AG04449 (cell line): ENCODE measurements at regions of chr1 and their contacts with region 1.

Region 1: DNA sequence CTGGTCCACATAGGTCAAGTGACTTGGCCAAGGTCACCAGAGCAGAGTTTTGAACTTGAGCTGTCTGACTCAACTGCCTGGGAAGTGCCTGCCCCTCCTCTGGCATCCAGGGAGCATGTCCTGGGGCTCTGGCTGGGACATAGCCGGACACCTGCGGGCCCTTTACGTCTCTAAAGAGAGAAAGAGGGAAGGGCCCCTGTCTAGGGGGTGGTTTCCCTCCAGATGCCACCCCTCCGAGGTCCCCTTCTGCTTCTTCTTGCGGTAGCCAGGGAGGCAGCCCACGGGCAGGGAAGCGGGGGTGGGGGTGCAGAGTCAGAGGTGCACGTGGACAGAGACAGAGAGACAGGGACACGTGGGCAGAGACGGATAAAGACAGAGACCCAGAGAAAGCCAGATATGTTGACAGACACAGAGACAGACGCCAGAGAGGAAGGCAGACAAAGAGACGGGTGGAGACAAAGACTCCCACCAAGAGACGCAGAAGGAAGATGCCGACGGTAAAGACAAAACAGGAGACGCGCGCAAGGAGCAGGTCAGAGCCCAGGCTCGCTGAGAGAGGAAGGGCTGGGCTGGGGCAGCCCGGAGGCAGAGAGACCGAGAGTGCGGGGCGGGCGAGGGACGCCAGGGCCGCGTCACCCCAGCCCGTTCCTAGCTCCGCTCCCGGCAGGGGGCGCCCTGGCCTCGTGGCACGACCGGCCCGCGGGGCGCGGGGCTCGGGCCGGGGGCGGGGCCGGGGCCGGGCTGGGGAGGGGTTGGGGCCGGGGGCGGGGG is 458 bp upstream of the ALPL start:
- DNase-seq: no peak
- H3K4me3 ChIP-seq: no peak overlapping the region; the same call in 1 of the 2 replicates
- CTCF ChIP-seq: peak; percentile 76

Region 2: GRCh38 chr1:21344750-21345443 is 163.9 kb before region 1 on chr1:
- CTCF ChIA-PET with region 1: no interaction called
- POLR2A ChIA-PET with region 1: no interaction called
- DNase-seq: no peak
- H3K4me3 ChIP-seq: peak overlapping the region; percentile 84
- CTCF ChIP-seq: no peak

Region 3: GRCh38 chr1:21497466-21498061 is 11.2 kb before region 1 on chr1:
- CTCF ChIA-PET with region 1: interaction called, 21 read pairs
- POLR2A ChIA-PET with region 1: no interaction called
- DNase-seq: no peak
- H3K4me3 ChIP-seq: no peak overlapping the region
- CTCF ChIP-seq: no peak

Region 4: GRCh38 chr1:21520899-21521716 is 12.3 kb after region 1 on chr1:
- CTCF ChIA-PET with region 1: interaction called, 22 read pairs
- POLR2A ChIA-PET with region 1: no interaction called
- DNase-seq: peak; percentile 23
- H3K4me3 ChIP-seq: no peak overlapping the region
- CTCF ChIP-seq: no peak

Region 5: DNA sequence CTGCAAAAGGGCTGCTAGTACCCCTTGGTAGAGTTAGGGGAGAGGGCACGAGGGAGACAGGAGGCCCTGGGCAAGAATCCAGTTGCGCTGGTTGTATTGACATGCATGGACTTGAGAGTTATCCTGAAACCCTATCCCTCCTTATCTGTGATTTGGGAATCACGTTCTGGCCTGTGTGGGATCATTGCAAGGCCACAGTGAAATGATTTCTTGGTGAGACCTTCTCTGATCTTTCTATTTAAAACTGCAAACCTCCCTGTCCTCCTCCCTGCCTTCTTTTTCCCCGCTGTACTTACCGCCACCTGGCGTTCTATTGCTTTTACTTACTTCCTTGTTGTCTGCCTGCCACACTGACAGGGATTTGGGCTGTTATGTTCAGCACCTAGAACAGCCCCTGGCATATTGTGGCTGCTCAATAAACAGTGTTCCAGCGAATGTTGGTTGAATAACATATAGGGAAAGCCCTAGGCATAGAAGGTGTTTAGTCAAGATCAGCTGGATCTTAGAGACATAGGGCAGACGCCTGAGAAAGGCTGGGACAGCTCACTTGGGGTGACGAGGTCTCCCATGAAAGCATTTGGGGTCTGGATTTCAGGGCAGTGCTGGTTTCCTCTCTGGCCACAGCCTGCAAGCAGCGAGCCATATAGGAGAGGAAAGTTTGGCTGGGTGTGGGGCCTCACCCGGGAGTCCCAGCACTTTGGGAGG is 26.1 kb after region 1 on chr1:
- CTCF ChIA-PET with region 1: interaction called, 24 read pairs
- POLR2A ChIA-PET with region 1: no interaction called
- DNase-seq: no peak
- H3K4me3 ChIP-seq: no peak overlapping the region
- CTCF ChIP-seq: peak; percentile 63

Region 6: DNA sequence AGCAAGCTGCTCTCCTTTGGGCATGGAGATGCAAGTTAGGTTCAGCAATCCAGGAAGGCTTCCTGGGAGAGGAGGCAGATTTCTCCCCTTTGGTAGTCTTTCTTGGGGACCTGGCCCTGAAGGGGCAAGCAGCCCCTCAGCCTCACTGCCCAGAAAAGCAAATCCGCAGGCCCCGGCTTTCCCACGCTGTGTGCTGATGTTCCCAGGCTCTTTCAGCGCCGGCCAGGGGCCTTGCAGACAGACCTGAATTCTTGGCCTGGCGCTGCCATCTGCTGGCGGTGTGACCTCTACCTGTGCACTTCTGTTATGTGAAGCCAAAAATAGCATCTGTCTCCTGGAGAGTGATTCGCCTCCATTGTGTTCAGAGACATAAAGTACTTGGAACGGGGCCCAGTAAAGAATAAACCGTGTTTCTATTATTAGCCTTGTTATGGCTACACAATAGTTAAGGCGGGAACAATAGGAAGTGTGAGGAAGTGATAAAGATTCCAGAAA is 65.3 kb after region 1 on chr1:
- CTCF ChIA-PET with region 1: interaction called, 40 read pairs
- POLR2A ChIA-PET with region 1: no interaction called
- DNase-seq: no peak
- H3K4me3 ChIP-seq: no peak overlapping the region
- CTCF ChIP-seq: peak; percentile 60